Right ventricle myocardium superior (tissue), 1 donor: ENCODE measurements at regions of chr11 and their contacts with region 1.

Region 1: DNA sequence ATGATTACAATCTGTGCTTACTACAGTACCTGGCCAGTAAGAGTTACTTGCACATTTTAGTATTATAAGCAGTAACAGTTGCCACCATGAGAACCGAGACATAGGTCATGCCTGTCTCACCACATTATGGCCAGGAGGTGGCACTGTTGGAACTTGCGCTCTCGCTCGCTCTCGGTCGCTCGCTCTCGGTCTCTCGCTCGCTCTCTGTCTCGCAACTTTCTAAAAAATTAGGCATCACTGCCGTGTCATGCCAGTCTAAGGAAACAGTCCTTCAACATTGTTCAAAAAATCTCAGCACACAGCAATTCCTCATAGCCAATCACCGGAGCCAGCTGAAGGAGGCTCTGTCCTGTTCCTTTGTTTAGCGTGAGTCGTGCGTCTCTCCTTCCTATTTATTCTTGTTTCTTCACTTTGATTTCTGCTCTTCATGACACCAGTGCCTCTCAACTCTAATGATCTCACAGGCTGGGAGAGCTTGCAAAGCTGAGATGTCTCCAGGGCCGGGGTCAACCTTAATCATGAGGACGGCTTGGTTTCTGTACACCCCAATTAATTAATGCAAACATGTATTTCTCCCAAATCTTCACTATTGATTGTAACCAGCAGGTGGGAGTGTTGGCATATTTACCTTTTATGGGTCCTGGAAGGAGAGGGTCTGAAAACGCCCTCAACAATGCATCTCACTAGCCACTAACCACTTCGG is 6.3 kb upstream of the ADAMTS8 start:
- DNase-seq: peak; percentile 81
- ATAC-seq: peak; percentile 94

Region 2: GRCh38 chr11:130029137-130029536 is 405.5 kb before region 1 on chr11:
- intact Hi-C with region 1: no loop called
- DNase-seq: no peak
- ATAC-seq: no peak

Region 3: DNA sequence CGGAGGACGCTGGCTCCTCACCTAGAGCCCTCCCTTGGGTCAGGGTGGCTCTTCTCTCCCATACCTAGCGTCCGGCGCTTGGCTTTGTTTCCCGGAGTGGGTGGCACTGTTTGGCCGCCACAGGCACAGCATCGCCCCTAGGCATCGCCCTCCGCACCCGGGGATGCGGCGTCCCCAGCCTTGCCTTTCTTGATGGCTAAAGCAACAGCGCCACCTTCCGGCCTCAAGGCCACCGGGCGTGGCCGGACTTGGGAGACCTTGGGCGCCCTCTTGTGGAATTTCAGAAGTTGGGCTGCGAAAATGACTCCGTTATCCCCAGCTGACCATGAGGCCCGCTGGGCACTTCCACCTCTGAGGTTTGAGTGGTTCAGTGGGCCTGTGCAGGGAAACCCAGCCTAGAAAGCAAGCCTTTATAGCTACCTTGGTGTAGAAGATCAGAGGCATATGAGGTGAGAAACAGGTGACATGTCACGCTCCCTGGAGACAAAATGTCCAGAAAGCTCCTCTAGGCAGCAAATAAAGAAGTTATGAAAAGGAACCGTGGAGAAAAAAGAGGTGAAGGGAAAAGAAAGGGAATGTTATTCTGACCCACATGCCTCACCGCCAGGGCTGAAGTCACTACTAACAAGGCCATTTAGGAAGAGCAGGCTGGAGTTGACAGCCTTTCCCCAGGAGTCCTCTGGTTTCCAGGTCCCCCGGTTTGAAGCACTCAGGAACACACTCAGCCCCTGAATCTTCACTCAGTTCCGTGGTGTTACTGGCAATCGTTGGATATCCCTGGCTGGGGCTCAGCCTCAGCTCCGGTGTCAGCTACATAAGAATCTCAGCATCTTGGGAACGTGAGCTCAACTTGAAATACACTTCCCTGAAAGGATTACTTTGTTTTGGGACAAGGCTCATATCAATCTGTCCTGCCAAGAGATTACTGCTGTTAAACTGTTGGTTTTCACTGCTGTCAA is 427.5 kb after region 1 on chr11:
- intact Hi-C with region 1: loop called (anchors 1 kb)
- DNase-seq: peak; percentile 95
- ATAC-seq: peak; percentile 69

Region 4: DNA sequence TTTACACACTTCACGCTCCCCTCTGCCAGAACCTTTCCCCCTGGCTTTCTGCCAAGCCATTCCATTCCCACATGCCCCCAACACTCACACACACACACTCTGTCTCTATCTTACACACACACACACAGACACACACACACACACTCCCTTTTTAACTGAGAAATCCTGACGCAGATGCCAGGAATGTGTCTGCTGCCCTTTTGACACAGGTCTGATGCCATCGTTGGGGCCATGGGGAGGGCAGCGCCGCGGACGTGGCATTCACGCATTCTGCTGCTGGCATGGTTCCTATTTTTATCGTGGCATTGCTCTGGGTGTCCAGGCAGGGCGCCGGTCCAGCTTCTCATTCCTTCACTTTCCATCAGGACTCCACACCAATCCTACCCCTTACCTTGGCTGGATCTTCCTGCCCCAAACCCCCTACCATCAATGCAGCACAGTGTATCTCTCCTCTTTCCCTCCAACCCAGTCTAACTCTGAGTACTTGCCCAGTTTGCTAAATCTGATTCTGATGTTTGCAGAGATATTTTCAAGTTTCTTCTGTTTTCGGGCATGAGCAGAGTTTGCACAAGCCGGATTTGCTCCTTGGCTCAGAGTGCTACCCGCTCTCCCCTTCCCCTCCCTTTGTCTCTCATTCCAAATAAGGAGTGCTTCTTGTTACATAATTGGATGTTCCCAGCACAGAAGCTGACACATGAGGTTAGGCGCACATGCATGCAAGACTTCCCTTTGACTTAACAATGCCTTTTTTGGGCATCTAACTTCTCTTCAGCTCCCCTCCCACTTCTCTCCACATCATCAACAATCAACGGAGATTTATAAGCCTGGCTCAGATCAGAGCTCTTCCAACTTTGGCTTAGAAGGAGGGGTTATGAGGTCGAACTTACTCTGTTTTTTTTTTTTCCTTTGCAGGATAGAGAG is 462.9 kb after region 1 on chr11:
- intact Hi-C with region 1: loop called (anchors 2 kb)
- DNase-seq: peak; percentile 84
- ATAC-seq: peak; percentile 84